Activated CD4-positive, alpha-beta memory T cell treated with anti-CD3 and anti-CD28 coated beads for 36 hours (primary cell): ENCODE measurements at regions of chr7 and their contacts with region 1.

Region 1: DNA sequence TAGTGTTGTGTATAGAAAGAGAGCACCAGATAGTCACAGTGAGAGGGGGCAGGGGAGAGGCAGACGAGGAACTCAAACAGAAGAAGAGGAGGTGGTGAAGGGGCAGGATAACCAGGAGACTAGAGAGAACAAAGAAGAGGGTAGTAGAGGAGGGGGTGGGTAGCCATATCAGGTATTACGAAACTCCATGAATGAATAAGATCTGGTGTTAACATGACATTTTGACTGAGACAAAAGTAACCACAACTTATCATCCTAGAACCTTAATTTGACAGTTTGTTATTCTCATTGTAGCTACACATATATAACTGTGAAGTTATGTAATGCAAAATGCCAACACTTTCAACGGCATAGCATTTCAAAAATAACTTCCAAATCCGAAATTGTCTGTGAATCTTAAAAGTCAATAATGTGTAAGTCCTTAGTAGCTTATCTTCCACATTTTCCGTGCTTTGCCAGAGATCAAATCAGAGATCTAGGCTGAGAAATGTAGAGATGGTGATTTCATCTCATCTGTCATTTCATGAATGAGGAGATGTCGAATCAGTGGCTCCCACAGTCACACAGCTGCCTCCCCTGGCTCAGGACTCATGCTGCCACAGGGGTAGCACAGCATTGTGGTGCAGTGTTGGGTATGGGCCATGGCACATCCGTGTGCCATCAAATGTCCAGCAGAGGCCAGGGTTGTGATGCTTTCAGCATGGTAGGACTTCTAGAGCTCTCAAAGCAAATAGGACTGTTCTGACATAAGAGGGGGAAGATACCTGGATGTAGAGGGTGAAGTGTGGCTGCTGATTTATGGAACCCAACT is 202.1 kb downstream of the HECW1 start:
- DNase-seq: peak; percentile 60
- H3K4me3 Mint-ChIP-seq: no peak overlapping the region
- H3K27ac Mint-ChIP-seq: no peak overlapping the region
- H3K4me1 Mint-ChIP-seq: peaks cover 18% of the 10 kb centered on the region
- H3K27me3 Mint-ChIP-seq: peaks cover 4% of the 10 kb centered on the region

Region 2: DNA sequence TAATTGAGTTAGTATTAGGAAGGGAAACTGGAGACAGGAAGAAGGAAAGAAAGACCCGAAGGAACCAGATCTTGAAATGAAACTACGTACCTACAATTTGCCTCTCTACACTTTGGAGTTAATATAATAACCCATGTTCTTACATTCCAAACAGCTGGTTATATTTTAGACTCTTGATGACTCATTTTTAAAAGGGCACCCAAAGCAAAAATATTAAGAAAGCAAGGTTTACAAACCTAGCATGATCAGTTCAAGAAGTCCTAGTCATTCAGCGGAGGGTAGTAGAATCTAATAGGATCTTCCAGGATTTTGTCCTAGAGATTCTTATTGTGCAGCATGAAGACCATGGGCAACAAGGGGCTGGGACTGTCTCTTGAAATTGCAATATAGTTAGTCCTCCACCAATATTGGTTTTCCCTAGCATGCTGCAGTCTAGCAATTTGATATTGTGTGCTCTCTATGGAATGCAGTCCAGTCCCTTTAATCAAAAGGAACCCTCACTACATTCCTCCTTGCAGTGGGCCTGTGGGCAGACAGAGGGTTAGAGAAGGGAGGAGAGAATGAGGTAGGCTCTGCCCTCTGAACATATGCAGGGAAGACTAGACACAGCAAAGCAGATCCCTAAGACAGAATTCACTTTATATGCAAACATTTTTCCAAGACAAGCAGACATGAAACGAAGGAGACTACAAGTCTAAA is 1842.0 kb before region 1 on chr7:
- CTCF ChIA-PET with region 1: no interaction called
- POLR2A ChIA-PET with region 1: no interaction called
- intact Hi-C with region 1: no loop called
- DNase-seq: no peak
- H3K4me3 Mint-ChIP-seq: no peak overlapping the region
- H3K27ac Mint-ChIP-seq: no peak overlapping the region
- H3K4me1 Mint-ChIP-seq: no peaks in the 10 kb centered on the region
- H3K27me3 Mint-ChIP-seq: no peaks in the 10 kb centered on the region

Region 3: GRCh38 chr7:43148161-43148731 is 166.3 kb before region 1 on chr7:
- CTCF ChIA-PET with region 1: no interaction called
- POLR2A ChIA-PET with region 1: no interaction called
- intact Hi-C with region 1: no loop called
- DNase-seq: no peak
- H3K4me3 Mint-ChIP-seq: no peak overlapping the region
- H3K27ac Mint-ChIP-seq: no peak overlapping the region
- H3K4me1 Mint-ChIP-seq: no peaks in the 10 kb centered on the region
- H3K27me3 Mint-ChIP-seq: peaks cover 17% of the 10 kb centered on the region

Region 4: DNA sequence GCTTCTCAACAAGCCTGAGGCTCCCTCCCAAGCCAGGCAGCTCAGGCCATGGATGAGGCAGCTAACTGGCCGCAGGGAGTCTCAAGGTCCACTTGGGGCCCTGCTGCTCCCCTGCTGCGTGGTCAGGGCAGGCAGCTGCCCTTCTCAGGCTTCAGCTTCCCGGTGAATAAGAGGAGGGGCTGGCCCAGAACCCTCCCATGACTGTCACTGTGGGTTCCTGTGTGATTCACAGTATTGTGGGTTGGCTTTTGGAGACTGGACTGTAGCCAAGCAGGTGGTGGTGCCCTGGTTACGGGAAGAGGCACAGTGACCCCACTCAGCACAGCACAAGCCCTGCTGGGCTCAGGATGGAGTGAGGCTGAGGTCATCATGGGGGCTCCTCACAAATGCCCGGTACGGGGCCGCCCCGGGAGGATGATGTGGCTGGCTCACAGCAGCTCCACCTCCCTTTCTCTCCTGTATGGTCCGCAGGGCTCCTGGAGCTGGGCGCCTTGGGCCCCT is 12.3 kb before region 1 on chr7:
- CTCF ChIA-PET with region 1: interaction called, 14 read pairs
- POLR2A ChIA-PET with region 1: interaction called, 5 read pairs
- intact Hi-C with region 1: loop called (anchors 1 kb)
- DNase-seq: peak; percentile 64
- H3K4me3 Mint-ChIP-seq: no peak overlapping the region
- H3K27ac Mint-ChIP-seq: no peak overlapping the region
- H3K4me1 Mint-ChIP-seq: peaks cover 31% of the 10 kb centered on the region
- H3K27me3 Mint-ChIP-seq: peaks cover 25% of the 10 kb centered on the region

Region 5: GRCh38 chr7:43362652-43363034 is 48.1 kb after region 1 on chr7:
- CTCF ChIA-PET with region 1: no interaction called
- POLR2A ChIA-PET with region 1: no interaction called
- intact Hi-C with region 1: no loop called
- DNase-seq: no peak
- H3K4me3 Mint-ChIP-seq: no peak overlapping the region
- H3K27ac Mint-ChIP-seq: no peak overlapping the region
- H3K4me1 Mint-ChIP-seq: no peaks in the 10 kb centered on the region
- H3K27me3 Mint-ChIP-seq: peaks cover 2% of the 10 kb centered on the region

Region 6: DNA sequence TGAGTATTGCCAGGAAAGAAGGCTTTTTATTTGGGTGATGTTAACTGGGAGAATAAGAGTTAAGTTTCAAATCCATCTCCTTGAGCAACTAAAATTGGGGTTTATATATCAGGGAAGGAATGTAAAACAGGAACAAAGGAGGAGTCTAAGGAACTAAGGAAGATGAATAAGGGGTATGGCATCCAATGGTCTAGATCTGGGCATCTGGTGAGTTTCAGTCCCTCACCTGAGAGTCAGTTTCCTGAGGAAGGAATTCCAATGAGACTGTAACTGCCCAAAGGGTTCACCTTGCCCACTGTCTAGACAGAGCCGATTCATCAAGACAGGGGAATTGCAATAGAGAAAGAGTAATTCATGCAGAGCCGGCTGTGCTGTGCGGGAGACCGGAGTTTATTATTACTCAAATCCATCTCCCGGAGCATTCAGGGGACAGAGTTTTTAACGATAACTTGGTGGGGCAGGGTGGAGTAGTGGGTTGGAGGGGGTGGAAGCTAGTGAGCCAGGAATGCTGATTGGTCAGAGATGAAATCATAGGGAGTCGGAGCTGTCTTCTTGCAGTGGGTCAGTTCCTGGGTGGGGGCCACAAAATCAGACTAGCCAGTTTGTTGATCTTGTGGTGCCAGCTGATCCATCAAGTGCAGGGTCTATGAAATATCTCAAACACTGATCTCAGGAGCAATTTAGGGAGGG is 80.0 kb after region 1 on chr7:
- CTCF ChIA-PET with region 1: no interaction called
- POLR2A ChIA-PET with region 1: no interaction called
- intact Hi-C with region 1: no loop called
- DNase-seq: no peak
- H3K4me3 Mint-ChIP-seq: no peak overlapping the region
- H3K27ac Mint-ChIP-seq: no peak overlapping the region
- H3K4me1 Mint-ChIP-seq: no peaks in the 10 kb centered on the region
- H3K27me3 Mint-ChIP-seq: peaks cover 13% of the 10 kb centered on the region